ENCODE measurements at regions of chr17 and their contacts with region 1.

Region 1: GRCh38 chr17:6269478-6269877 is 165.4 kb downstream of the AIPL1 start:
- DNase-seq: peak; percentile 6
- ATAC-seq: no peak
- H3K4me3 ChIP-seq: no peak overlapping the region
- H3K27ac ChIP-seq: no peak overlapping the region
- H3K4me1 ChIP-seq: no peaks in the 10 kb centered on the region
- H3K27me3 ChIP-seq: peaks cover 23% of the 10 kb centered on the region
- CTCF ChIP-seq: no peak
- POLR2A ChIP-seq: no peak
- RAD21 ChIP-seq: no peak

Region 2: GRCh38 chr17:5975661-5976060 is 293.8 kb before region 1 on chr17:
- CTCF ChIA-PET with region 1: no interaction called
- POLR2A ChIA-PET with region 1: no interaction called
- RAD21 ChIA-PET with region 1: no interaction called
- intact Hi-C with region 1: no loop called
- DNase-seq: no peak
- ATAC-seq: no peak
- H3K4me3 ChIP-seq: no peak overlapping the region
- H3K27ac ChIP-seq: no peak overlapping the region
- H3K4me1 ChIP-seq: no peaks in the 10 kb centered on the region
- H3K27me3 ChIP-seq: peaks cover 81% of the 10 kb centered on the region
- CTCF ChIP-seq: no peak
- POLR2A ChIP-seq: no peak
- RAD21 ChIP-seq: no peak

Region 3: DNA sequence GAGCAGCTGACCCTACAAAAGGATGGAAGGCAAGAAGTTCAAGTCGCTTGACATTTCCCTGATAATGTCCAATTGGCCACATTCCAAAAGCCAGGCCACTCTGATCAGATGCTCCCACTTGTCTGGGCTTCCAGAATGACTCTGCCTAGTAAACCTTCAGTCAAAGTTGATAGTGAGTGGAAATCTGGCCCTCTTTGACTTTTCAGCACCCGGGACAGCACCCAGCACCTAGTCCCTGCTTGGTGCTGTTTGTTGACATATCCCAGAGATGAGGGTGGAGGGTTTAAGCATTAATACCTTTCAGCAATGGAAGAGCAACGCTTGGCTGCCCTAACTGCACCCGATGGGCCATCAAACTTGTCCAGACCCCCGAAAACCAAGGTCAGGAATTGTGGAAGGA is 34.2 kb after region 1 on chr17:
- CTCF ChIA-PET with region 1: no interaction called
- POLR2A ChIA-PET with region 1: no interaction called
- RAD21 ChIA-PET with region 1: no interaction called
- intact Hi-C with region 1: loop called (anchors 2 kb)
- DNase-seq: no peak
- ATAC-seq: no peak
- H3K4me3 ChIP-seq: no peak overlapping the region
- H3K27ac ChIP-seq: no peak overlapping the region
- H3K4me1 ChIP-seq: no peaks in the 10 kb centered on the region
- H3K27me3 ChIP-seq: peaks cover 74% of the 10 kb centered on the region
- CTCF ChIP-seq: no peak
- POLR2A ChIP-seq: no peak
- RAD21 ChIP-seq: no peak

Measured in HCT116 (cell line).